Ovary (tissue), 10 donors: ENCODE measurements at regions of chr1 and their contacts with region 1.

Region 1: DNA sequence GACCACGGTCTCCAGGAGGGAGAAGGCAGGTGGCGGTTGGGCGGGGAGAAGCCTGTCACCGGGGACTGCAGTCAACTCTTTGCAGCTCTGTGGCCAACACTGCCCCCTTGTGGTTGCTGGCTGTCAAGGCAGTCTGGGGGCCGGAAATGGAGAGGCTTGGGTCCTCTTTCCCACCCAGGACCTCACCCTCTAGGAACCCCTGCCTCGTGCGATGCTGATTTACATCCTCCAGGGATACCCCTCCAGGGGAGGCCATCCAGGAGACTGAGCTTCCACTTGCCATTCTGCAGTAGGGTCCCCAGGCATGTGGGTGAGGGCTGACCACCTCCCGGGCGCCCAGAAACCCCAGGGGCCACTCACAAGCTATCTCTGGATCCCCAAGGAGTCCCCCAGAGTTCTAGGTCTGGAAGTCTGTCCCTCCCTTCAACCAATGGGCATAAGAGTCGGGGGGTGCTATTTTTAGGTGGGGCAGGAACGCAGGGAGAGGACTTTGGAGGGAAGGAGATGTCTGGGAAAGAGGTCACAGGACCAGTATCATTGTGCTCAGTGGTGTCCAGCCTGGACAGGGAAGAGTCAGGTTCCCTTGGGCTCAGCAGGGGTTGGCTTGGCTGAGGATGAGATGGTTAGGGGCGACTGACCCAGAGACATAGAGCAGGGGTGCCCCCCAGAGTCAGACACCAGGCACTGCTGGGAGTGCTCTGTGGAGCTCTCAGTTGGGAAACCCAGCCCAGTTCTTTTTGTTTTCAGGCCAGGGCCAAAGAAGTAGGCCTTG is 7.1 kb upstream of the GPR61 start:
- DNase-seq: peak; percentile 82 to 91 (median 89)
- H3K4me3 ChIP-seq: no peak overlapping the region
- H3K27ac ChIP-seq: no peak overlapping the region
- H3K4me1 ChIP-seq: peaks cover 4% of the 10 kb centered on the region
- H3K27me3 ChIP-seq: no peaks in the 10 kb centered on the region
- CTCF ChIP-seq: peak; percentile 96 to 97 (median 96)
- EP300 ChIP-seq: no peak
- POLR2A ChIP-seq: no peak

Region 2: GRCh38 chr1:109263597-109264398 is 268.8 kb before region 1 on chr1:
- intact Hi-C with region 1: loop called in 3 of 4 experiments (anchors 5 to 10 kb)
- DNase-seq: peak; percentile 62 to 86 (median 79)
- H3K4me3 ChIP-seq: no peak overlapping the region
- H3K27ac ChIP-seq: no peak overlapping the region
- H3K4me1 ChIP-seq: no peaks in the 10 kb centered on the region
- H3K27me3 ChIP-seq: no peaks in the 10 kb centered on the region
- CTCF ChIP-seq: peak; percentile 76 to 98 (median 94)
- EP300 ChIP-seq: no peak
- POLR2A ChIP-seq: no peak

Region 3: DNA sequence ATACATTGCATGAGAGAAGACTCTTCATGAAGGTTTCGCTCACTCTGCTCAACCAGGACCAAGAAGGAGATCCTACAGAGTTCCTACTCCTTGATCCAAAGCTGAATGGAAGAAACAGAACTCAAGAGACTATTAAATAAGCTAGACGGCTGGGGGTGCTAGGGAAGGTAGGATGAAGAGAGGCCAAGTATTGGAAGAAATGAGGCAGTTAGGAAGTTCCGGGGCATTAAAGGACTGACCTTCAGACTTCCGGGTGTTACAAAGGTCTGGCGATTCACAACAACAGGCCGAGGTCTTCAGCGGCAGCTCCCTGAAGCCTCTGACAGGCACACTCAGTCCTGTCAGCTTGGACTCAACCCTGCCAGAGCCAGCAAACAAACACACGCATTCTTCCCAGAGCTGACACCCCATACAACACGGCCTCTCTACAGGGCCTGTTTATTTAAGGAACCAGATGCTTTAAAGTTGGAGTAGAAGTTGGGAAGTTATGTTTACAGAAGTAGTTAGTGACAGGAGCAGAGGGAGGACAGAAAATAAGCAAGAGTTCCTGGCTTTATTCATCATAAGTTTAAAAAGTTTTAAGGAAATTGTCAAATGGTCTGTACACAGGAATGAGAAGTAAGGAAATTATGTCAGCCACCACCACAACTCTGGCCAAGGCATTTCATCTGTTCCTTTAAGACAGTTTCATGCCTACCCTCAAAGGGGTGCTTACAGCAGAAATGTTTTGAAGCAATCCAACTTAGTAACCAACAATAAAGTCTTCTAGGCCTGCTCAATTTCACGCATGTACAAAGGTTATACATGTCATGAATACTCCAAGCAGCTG is 139.5 kb before region 1 on chr1:
- intact Hi-C with region 1: no loop called
- DNase-seq: peak in 1 of 5 donors; percentile 22
- H3K4me3 ChIP-seq: no peak overlapping the region
- H3K27ac ChIP-seq: no peak overlapping the region
- H3K4me1 ChIP-seq: peaks cover 4% of the 10 kb centered on the region
- H3K27me3 ChIP-seq: no peaks in the 10 kb centered on the region
- CTCF ChIP-seq: no peak
- EP300 ChIP-seq: no peak
- POLR2A ChIP-seq: no peak

Region 4: GRCh38 chr1:109426278-109427170 is 106.0 kb before region 1 on chr1 and contains the start of gene PSMA5:
- intact Hi-C with region 1: loop called in 2 of 4 experiments (anchors 10 kb)
- DNase-seq: peak; percentile 92 to 96 (median 93)
- H3K4me3 ChIP-seq: peak within 1 kb of the TSS; percentile 74
- H3K27ac ChIP-seq: peak within 1 kb of the TSS in 1 of 2 donors; percentile 81
- H3K4me1 ChIP-seq: peaks cover 3% of the 10 kb centered on the region
- H3K27me3 ChIP-seq: no peaks in the 10 kb centered on the region
- CTCF ChIP-seq: no peak
- EP300 ChIP-seq: no peak
- POLR2A ChIP-seq: peak; percentile 17
- total RNA-seq, gene PSMA5: 19.4 to 52.0 (median 42.2) TPM

Region 5: DNA sequence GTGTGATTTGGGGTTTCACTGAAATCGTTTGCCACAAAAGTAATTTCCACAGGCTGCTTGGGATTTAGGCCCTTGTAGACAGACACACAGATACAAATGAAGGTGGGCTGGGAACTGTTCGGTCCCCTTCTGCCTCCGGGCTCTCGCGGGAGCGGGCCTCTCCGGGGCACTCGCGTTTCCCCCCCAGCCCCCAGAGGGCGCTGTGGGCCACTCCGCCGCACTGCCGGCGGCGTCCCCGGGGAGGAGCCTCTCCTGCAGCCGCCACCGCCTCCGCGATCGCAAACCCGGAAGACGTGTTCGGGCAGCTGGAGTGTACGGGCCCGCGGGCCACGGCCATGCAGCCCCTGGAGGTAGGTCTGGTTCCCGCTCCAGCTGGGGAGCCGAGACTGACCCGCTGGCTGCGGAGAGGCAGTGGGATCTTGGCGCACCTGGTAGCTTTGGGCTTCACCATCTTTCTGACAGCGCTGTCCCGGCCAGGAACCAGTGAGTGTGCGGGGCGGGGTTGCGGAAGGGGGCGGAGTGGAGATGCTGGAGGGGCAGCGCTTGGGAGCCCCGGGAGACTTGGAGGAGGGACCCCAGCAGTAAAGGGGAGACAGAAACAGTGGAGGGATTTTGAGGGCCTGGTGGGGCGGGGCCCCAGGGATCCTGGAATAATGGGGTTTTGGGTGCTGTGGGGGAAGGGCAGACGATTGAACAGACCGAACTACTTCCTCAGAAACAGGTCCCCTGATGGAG is 38.6 kb before region 1 on chr1 and contains the start of gene CYB561D1:
- intact Hi-C with region 1: loop called (anchors 2 to 5 kb)
- DNase-seq: peak; percentile 84 to 91 (median 87)
- H3K4me3 ChIP-seq: peak within 1 kb of the TSS; percentile 90
- H3K27ac ChIP-seq: peak within 1 kb of the TSS in 1 of 2 donors; percentile 49
- H3K4me1 ChIP-seq: peaks cover 10% of the 10 kb centered on the region
- H3K27me3 ChIP-seq: no peaks in the 10 kb centered on the region
- CTCF ChIP-seq: peak; percentile 92 to 95 (median 92)
- EP300 ChIP-seq: no peak
- POLR2A ChIP-seq: peak; percentile 46
- total RNA-seq, gene CYB561D1: 3.8 to 11.7 (median 9.3) TPM

Region 6: GRCh38 chr1:110976089-110976488 is 1443.5 kb after region 1 on chr1:
- intact Hi-C with region 1: loop called in 1 of 4 experiments (anchors 5 kb)
- DNase-seq: no peak
- H3K4me3 ChIP-seq: no peak overlapping the region
- H3K27ac ChIP-seq: no peak overlapping the region
- H3K4me1 ChIP-seq: no peaks in the 10 kb centered on the region
- H3K27me3 ChIP-seq: no peaks in the 10 kb centered on the region
- CTCF ChIP-seq: no peak
- EP300 ChIP-seq: no peak
- POLR2A ChIP-seq: no peak